ENCODE measurements at regions of chr6 and their contacts with region 1.

Region 1: GRCh38 chr6:21593412-21593926 is at the start of gene SOX4:
- DNase-seq: peak; percentile 99
- H3K4me3 Mint-ChIP-seq: no peak within 1 kb of the TSS
- H3K27ac Mint-ChIP-seq: no peak within 1 kb of the TSS
- H3K4me1 Mint-ChIP-seq: peaks cover 2% of the 10 kb centered on the region
- H3K27me3 Mint-ChIP-seq: no peaks in the 10 kb centered on the region
- CTCF ChIP-seq: no peak
- total RNA-seq, gene SOX4: 109 and 120 TPM in 2 replicates

Region 2: DNA sequence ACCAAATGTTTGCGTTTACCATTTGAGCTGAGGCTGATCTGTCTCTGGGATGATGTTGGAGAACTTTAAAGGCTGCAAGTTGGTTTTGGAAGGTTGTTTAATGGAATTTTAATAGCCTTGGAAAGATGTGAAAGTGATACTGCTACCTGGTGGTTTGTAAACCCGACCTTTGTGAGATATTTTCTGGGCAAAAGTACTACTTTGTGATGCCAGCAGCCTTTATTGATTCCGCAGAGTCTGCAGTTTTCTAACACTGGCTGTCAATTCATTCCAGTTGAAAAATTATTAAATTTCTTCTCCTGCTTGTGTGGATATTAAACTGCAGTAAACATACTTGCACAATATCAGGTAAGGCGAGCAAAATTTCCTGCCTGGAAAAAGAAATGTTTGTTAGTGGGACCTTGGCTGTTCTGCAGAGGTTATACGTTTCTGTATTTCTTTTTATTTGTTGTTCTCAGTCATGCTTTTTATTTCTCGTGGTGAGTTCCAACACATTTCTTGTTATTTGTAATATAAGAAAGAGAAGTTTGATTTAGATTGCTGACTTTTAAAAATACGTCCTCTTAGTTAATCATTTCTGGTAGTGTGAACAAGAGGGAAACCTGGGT is 736.7 kb before region 1 on chr6:
- CTCF ChIA-PET with region 1: no interaction called
- intact Hi-C with region 1: no loop called
- DNase-seq: no peak
- H3K4me3 Mint-ChIP-seq: no peak overlapping the region
- H3K27ac Mint-ChIP-seq: no peak overlapping the region
- H3K4me1 Mint-ChIP-seq: no peaks in the 10 kb centered on the region
- H3K27me3 Mint-ChIP-seq: no peaks in the 10 kb centered on the region
- CTCF ChIP-seq: no peak

Region 3: DNA sequence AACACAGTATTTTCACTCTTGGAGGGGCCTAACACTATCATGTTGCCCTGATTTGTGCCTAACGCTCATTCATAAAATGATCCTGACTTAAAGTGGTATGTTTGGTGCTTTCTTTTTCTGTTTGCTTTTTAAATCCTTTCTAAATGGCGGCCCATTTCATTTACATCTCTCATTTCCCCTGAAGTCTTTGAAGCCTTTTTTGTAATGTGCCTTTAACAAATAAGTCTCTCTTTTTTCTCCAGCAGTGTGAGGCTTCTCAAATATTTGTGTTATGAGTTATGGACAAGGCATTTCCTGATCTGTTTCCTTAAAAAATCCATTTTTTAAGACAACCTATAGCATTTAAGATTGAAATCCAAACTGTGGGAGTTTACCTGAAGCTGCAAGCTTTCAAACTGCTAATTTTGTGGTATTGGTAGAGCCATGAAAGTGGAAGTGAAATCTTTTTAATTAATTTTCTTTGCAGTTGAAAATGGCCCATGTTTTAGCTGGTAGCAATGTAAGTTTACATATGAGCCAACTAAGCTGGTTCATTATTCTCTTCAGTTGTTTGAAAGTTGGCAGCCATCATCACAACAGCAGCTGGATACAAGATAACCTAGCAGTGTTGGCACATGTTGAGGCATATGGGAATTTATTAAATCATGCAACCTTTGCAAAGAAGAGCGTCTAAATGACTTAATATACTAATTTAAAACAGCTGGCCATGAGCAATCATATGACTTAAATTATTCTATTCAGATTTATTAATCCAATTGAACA is 589.5 kb before region 1 on chr6:
- CTCF ChIA-PET with region 1: no interaction called
- intact Hi-C with region 1: loop called (anchors 5 kb)
- DNase-seq: peak; percentile 4
- H3K4me3 Mint-ChIP-seq: peak overlapping the region; percentile 3
- H3K27ac Mint-ChIP-seq: peak overlapping the region; percentile 87
- H3K4me1 Mint-ChIP-seq: peaks cover 40% of the 10 kb centered on the region
- H3K27me3 Mint-ChIP-seq: no peaks in the 10 kb centered on the region
- CTCF ChIP-seq: no peak

Region 4: DNA sequence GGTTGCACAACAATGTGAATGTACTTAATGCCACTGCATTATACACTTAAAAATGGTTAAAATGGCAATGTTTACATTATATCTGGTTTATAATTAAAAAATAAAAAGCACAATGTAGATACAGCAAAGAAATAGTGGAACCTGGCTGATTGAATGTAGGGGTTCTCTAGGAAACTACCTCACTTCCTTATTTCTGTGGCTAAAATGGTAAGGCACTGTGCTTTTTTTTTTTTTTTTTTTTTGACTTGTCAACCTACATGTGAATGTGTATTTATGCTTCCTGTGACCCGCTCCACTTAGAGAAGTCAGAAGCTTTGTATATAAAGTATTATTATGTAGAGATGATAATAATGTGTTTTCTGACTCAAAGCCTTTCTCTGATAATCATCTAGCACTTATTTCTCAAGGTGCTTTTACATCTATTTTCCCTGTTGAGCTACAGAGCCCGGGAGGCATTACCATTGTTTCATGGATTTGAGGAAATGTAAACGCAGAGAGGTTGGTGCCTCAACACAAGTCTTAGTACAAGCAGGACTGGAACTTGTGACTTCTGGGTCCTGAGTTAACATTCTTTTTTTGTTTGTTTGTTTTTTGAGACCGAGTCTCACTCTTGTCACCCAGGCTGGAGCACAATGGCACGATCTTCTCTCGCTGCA is 55.1 kb after region 1 on chr6:
- CTCF ChIA-PET with region 1: interaction called, 3 read pairs
- intact Hi-C with region 1: loop called (anchors 5 kb)
- DNase-seq: no peak
- H3K4me3 Mint-ChIP-seq: no peak overlapping the region
- H3K27ac Mint-ChIP-seq: no peak overlapping the region
- H3K4me1 Mint-ChIP-seq: peaks cover 34% of the 10 kb centered on the region
- H3K27me3 Mint-ChIP-seq: no peaks in the 10 kb centered on the region
- CTCF ChIP-seq: no peak

Region 5: GRCh38 chr6:21885532-21886114 is 292.2 kb after region 1 on chr6:
- CTCF ChIA-PET with region 1: interaction called, 9 read pairs
- intact Hi-C with region 1: loop called (anchors 1 kb)
- DNase-seq: peak; percentile 86
- H3K4me3 Mint-ChIP-seq: no peak overlapping the region
- H3K27ac Mint-ChIP-seq: no peak overlapping the region
- H3K4me1 Mint-ChIP-seq: peaks cover 10% of the 10 kb centered on the region
- H3K27me3 Mint-ChIP-seq: no peaks in the 10 kb centered on the region
- CTCF ChIP-seq: no peak

Region 6: DNA sequence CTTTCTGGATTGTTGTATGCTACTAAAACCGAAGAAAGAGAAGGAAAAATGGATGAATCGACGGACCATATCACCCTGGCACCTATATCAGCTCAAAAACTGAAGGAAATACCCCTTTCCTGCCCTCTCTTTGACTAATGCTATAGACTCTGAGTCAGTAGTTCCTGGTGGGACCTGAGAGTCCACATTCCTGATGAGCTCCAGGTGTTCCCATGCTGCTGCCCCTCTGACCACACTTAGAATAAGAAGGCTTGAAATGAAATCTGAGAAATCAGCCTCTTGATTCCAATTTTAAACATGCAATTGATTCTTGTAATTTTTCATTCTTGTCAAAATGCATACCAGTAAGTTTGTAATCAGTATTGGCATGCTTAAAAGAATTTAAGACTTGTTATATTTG is 628.2 kb after region 1 on chr6:
- CTCF ChIA-PET with region 1: interaction called, 3 read pairs
- intact Hi-C with region 1: loop called (anchors 10 kb)
- DNase-seq: peak; percentile 79
- H3K4me3 Mint-ChIP-seq: peak overlapping the region; percentile 34
- H3K27ac Mint-ChIP-seq: peak overlapping the region; percentile 53
- H3K4me1 Mint-ChIP-seq: peaks cover 13% of the 10 kb centered on the region
- H3K27me3 Mint-ChIP-seq: no peaks in the 10 kb centered on the region
- CTCF ChIP-seq: no peak

Region 7: DNA sequence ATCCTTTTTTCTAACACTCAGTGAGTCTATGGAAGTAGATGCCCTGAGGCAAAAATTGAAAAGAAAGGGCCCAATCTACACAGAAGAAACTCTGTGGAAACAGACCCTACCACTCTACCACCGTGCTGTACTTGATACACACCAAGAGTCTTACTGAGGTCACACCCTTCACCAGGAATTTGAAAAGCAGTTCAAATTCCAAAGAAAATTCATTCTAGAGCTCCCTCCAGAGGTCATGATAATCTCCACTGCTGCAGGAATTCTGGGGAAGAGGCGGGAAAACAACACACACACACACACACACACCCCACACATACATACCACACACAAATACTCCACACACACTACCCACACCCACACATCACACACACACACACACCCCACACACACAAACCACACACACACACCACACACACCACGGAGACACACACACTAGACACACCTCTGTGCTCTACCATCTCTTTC is 1312.7 kb after region 1 on chr6:
- CTCF ChIA-PET with region 1: no interaction called
- intact Hi-C with region 1: loop called (anchors 1 kb)
- DNase-seq: peak; percentile 34
- H3K4me3 Mint-ChIP-seq: no peak overlapping the region
- H3K27ac Mint-ChIP-seq: no peak overlapping the region
- H3K4me1 Mint-ChIP-seq: peaks cover 31% of the 10 kb centered on the region
- H3K27me3 Mint-ChIP-seq: no peaks in the 10 kb centered on the region
- CTCF ChIP-seq: peak; percentile 30